Prostate gland (tissue), 2 donors: ENCODE measurements at regions of chr6 and their contacts with region 1.

Region 1: DNA sequence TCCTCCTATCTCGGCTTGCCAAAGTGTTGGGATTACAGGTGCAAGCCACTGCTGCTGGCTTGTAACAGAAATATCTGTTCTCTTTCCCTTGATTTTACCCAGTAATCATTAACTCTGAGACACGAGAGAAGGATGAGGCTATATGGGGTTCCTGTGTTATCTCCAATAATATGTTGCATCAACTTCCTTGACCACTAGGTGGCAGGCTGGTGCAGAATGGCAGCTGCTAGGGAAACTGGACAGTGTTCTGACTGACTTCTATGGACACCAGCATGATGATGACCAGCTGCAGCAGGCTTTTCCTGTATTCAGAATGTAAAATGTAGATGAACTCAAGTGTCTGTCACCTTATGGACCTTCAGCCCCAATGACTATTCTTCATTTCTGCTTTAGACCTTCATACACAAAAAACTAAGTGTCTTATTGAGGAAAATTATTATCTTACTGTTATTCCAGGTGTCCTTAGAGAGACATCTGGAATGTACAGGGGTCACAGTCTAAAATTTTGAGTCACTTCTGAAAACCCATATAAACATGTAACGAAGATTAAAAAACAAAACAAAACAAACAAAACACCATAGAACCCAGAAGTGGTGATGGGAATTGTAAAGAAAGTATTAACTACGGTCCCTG is 20.4 kb upstream of the CD109 start:
- DNase-seq: peak; percentile 80
- H3K4me3 ChIP-seq: no peak overlapping the region
- H3K27ac ChIP-seq: no peak overlapping the region
- H3K4me1 ChIP-seq: no peaks in the 10 kb centered on the region
- H3K27me3 ChIP-seq: no peaks in the 10 kb centered on the region
- CTCF ChIP-seq: peak; percentile 80 to 93 (median 85)
- POLR2A ChIP-seq: no peak

Region 2: GRCh38 chr6:73732845-73733675 is 57.5 kb after region 1 on chr6:
- intact Hi-C with region 1: loop called (anchors 2 kb)
- DNase-seq: peak; percentile 58
- H3K4me3 ChIP-seq: no peak overlapping the region
- H3K27ac ChIP-seq: no peak overlapping the region
- H3K4me1 ChIP-seq: no peaks in the 10 kb centered on the region
- H3K27me3 ChIP-seq: no peaks in the 10 kb centered on the region
- CTCF ChIP-seq: peak; percentile 79 to 89 (median 82)
- POLR2A ChIP-seq: no peak